ENCODE measurements at regions of chr6 and their contacts with region 1.

Region 1: DNA sequence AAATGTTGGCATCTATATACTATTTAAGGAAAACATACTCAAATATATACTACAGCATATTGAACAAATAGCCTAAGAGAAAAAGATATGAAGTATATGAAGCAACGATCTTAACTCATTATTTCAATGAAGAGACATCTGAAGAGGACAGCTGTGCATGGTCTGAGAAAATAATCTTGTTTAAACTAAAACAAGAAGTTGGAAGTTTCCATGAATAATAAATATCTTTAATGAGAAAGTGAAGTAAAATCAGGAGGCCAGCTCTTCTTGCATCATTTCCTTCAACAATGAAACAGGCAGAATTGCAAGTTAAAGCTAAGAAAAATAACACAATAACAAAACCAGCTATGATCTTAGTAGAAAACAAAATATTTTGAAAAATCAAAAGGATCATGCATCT is 1265.4 kb upstream of the MAP3K7 start:
- DNase-seq: no peak
- H3K4me3 ChIP-seq: no peak overlapping the region
- CTCF ChIP-seq: no peak
- POLR2A ChIP-seq: no peak

Region 2: DNA sequence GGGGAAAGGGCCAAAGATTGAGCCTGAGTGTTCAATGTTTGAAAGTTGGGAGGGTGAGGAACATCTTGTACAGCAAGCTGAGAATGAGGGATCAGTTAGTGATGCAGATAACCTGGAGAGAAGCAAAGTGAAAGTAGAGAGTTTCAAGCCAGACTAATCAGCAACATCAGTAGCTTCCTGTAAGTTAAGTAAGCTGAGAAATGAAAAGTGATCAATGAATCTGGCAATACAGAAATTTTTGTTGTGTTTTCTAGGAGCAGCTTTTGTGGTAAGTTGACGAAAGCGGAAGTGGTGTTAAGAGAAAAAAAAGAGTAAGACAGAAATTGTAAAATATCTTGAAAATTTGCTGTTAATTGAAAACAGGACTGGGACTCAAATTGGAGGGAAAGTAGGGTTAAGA is 409.9 kb before region 1 on chr6:
- intact Hi-C with region 1: loop called (anchors 5 kb)
- DNase-seq: no peak
- H3K4me3 ChIP-seq: no peak overlapping the region
- CTCF ChIP-seq: no peak
- POLR2A ChIP-seq: no peak